ENCODE measurements at regions of chr2 and their contacts with region 1.

Region 1: DNA sequence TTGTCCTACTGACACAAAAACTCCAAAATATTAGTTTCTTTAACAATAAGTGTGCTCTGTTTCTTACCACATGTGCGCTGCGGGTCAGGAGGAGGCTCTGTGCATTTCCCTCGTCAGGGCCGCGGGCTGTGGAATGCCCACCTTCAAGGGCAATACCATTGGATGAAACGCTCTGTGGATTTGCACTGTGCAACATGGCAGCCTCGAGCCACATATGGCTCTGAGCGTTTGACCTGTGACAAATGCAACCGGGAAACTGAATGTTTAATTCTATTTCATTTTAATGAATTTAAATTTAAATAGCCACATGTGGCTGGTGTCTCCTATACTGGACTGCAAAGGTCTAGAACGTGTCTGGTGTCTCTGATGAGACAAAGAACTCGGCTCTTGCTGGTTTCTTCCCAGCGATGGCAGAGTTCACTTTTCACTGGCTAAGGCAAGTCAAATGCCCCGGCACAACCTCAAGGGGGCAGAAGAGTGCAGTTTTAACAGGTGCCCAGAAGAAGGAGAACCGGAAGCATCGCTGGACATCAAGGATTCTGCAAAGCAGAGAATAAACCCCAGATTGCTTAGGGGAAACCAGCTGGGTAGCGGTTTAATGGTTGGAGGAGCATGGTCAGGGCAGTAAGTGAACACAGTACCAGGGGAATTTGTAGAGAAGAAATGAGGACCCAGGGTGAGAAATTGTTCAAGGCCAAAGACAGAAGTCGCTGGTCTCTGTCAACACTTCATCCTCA is 37.0 kb upstream of the TMEM18 start:
- DNase-seq: peak; percentile 58
- H3K4me3 Mint-ChIP-seq: no peak overlapping the region
- H3K27ac Mint-ChIP-seq: no peak overlapping the region
- H3K4me1 Mint-ChIP-seq: no peaks in the 10 kb centered on the region
- H3K27me3 Mint-ChIP-seq: peaks cover 42% of the 10 kb centered on the region

Region 2: GRCh38 chr2:685421-685820 is 28.8 kb before region 1 on chr2:
- CTCF ChIA-PET with region 1: no interaction called
- POLR2A ChIA-PET with region 1: no interaction called
- intact Hi-C with region 1: no loop called
- DNase-seq: no peak
- H3K4me3 Mint-ChIP-seq: no peak overlapping the region
- H3K27ac Mint-ChIP-seq: no peak overlapping the region
- H3K4me1 Mint-ChIP-seq: no peaks in the 10 kb centered on the region
- H3K27me3 Mint-ChIP-seq: peaks cover 11% of the 10 kb centered on the region

Region 3: GRCh38 chr2:842151-842803 is 128.1 kb after region 1 on chr2:
- CTCF ChIA-PET with region 1: no interaction called
- POLR2A ChIA-PET with region 1: no interaction called
- intact Hi-C with region 1: no loop called
- DNase-seq: no peak
- H3K4me3 Mint-ChIP-seq: no peak overlapping the region
- H3K27ac Mint-ChIP-seq: no peak overlapping the region
- H3K4me1 Mint-ChIP-seq: no peaks in the 10 kb centered on the region
- H3K27me3 Mint-ChIP-seq: peaks cover 33% of the 10 kb centered on the region

Region 4: DNA sequence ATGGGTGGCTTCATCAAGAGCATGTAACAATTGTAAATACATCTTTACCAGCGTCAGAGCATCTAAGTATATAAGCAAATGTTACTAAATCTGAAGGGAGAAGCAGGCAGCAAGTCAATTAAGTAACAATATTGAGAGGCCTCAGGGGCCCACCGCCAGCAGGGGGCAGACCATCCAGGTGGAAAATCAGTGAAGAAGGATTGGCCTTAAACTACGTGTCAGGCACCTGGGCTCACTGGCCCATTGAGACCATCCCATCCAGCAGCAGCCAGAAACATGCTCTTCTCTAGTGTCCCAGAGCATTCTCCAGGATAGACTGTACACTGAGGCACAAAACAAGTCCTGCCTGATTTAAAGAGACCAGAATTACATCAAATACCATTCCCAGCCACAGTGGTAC is 140.3 kb after region 1 on chr2:
- CTCF ChIA-PET with region 1: no interaction called
- POLR2A ChIA-PET with region 1: no interaction called
- intact Hi-C with region 1: loop called (anchors 10 kb)
- DNase-seq: peak; percentile 72
- H3K4me3 Mint-ChIP-seq: no peak overlapping the region
- H3K27ac Mint-ChIP-seq: peak overlapping the region; percentile 43
- H3K4me1 Mint-ChIP-seq: peaks cover 22% of the 10 kb centered on the region
- H3K27me3 Mint-ChIP-seq: no peaks in the 10 kb centered on the region

Region 5: GRCh38 chr2:1550658-1551316 is 836.6 kb after region 1 on chr2:
- CTCF ChIA-PET with region 1: interaction called, 9 read pairs
- POLR2A ChIA-PET with region 1: no interaction called
- intact Hi-C with region 1: loop called (anchors 1 kb)
- DNase-seq: peak; percentile 65
- H3K4me3 Mint-ChIP-seq: no peak overlapping the region
- H3K27ac Mint-ChIP-seq: no peak overlapping the region
- H3K4me1 Mint-ChIP-seq: peaks cover 4% of the 10 kb centered on the region
- H3K27me3 Mint-ChIP-seq: peaks cover 1% of the 10 kb centered on the region

Region 6: DNA sequence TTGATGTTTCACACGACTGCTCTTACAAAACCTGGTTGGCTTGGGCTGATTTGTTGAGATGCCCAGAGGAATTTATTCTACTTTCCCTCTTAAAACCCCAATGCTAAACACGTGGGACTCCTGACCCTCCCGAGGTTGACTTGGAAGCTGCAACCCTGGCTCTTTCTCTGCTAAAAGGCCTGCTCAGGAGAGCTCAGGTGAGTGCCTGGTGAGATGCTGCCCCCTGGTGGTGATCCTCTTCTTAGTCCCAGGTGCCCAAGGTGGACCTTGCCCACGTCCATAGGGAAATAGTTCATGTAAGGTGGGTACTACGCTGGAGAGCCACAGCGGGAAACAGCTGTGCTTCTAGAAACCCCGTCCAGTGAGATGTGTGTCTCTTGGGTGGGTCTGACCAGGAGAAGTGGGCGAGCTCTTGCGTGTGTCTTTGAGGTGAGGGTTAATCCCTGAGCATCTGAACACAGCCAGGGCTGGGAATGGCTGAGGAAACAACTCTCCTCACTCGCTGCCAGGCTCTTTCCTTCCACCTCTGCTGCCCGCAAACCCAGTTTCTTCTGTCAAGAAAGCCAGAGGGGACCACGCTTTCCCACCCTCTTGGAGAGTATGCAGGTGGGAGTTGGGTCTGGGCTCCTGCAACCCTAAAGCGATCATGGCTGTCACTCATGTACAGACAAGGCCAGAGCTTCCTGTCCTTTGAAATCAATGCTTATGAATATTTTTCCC is 1055.7 kb after region 1 on chr2:
- CTCF ChIA-PET with region 1: no interaction called
- POLR2A ChIA-PET with region 1: no interaction called
- intact Hi-C with region 1: loop called (anchors 10 kb)
- DNase-seq: peak; percentile 65
- H3K4me3 Mint-ChIP-seq: no peak overlapping the region
- H3K27ac Mint-ChIP-seq: no peak overlapping the region
- H3K4me1 Mint-ChIP-seq: no peaks in the 10 kb centered on the region
- H3K27me3 Mint-ChIP-seq: peaks cover 2% of the 10 kb centered on the region

Measured in activated CD4-positive, alpha-beta memory T cell treated with anti-CD3 and anti-CD28 coated beads for 36 hours (primary cell).